CD4-positive, alpha-beta T cell (primary cell): ENCODE measurements at regions of chrX and their contacts with region 1.

Region 1: DNA sequence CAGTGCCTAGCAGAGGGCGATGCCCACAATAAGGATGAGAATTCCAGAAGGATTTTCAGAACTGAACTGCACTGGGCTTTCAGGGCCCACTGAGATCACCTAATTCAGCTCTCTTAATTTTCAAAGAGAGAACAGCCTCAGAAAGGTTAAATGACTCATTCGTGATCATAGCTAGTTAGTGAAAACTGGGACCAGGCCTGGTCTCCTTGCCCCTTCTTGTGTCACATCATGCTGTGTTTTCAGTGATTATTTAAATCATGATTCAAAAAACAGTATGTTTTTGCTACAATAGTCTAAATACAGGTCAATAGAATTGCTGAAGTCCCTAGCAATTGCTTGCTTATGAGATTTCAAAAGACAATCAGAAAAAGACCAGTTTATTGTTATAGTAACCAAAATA is 136.4 kb upstream of the PLAC1 start:
- DNase-seq: no peak
- ATAC-seq: no peak
- H3K4me3 ChIP-seq: no peak overlapping the region
- H3K4me3 Mint-ChIP-seq: peak overlapping the region; percentile 38
- H3K27ac ChIP-seq: no peak overlapping the region
- H3K27ac Mint-ChIP-seq: peak overlapping the region; percentile 39
- H3K4me1 ChIP-seq: peaks cover 11% of the 10 kb centered on the region
- H3K4me1 Mint-ChIP-seq: peaks cover 26% of the 10 kb centered on the region
- H3K27me3 ChIP-seq: no peaks in the 10 kb centered on the region
- H3K27me3 Mint-ChIP-seq: no peaks in the 10 kb centered on the region
- CTCF ChIP-seq: no peak

Region 2: DNA sequence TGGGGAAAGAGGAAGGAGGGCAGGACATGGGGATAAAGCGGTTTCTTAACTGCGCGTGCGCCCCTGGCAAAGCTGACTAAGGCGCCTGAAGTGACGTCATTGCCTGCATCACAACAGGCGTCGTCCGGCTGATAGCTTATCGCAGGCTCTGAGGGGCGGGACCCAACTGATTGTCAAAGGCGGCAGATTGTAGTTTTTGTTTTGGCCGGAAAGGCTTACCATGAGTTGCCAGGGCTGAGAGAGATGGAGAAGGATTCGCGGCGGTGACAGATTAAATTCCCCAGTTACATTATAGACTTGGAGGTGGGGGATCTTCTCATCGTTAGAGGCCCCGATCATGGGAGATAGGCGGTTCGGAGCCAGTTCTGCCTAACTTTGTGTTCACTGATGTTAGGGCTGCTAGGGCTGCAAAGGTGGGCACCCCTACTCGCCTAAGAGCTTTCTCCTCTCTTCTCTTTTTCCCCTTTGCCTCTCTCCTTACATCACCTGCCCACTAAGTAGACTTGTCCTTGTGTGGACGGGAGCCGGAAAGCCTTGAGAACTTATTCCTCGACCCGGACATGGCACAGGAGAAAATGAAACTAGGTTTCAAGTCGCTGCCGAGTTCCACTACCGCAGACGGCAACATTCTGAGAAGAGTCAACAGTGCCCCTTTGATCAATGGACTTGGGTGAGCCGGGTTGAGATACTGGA is 12.5 kb after region 1 on chrX:
- CTCF ChIA-PET with region 1: no interaction called
- POLR2A ChIA-PET with region 1: interaction called, 7 read pairs
- intact Hi-C with region 1: loop called in 1 of 2 experiments (anchors 2 kb)
- DNase-seq: peak; percentile 68 to 97 (median 80)
- ATAC-seq: peak; percentile 87
- H3K4me3 ChIP-seq: peak overlapping the region; percentile 86
- H3K4me3 Mint-ChIP-seq: peak overlapping the region; percentile 94
- H3K27ac ChIP-seq: peak overlapping the region; percentile 92 to 96
- H3K27ac Mint-ChIP-seq: peak overlapping the region; percentile 93
- H3K4me1 ChIP-seq: peaks cover 18% of the 10 kb centered on the region
- H3K4me1 Mint-ChIP-seq: peaks cover 36% of the 10 kb centered on the region
- H3K27me3 ChIP-seq: no peaks in the 10 kb centered on the region
- H3K27me3 Mint-ChIP-seq: no peaks in the 10 kb centered on the region
- CTCF ChIP-seq: no peak